ENCODE measurements at regions of chr2 and their contacts with region 1.

Region 1: GRCh38 chr2:202147775-202148174 is 74.7 kb downstream of the KIAA2012 start:
- DNase-seq: no peak
- H3K27ac ChIP-seq: no peak overlapping the region
- CTCF ChIP-seq: no peak

Region 2: GRCh38 chr2:202158796-202159195 is 11.0 kb after region 1 on chr2:
- CTCF ChIA-PET with region 1: no interaction called
- POLR2A ChIA-PET with region 1: no interaction called
- DNase-seq: no peak
- H3K27ac ChIP-seq: no peak overlapping the region
- CTCF ChIP-seq: no peak

Region 3: GRCh38 chr2:202278944-202279343 is 131.2 kb after region 1 on chr2:
- CTCF ChIA-PET with region 1: no interaction called
- POLR2A ChIA-PET with region 1: interaction called, 11 read pairs
- DNase-seq: peak; percentile 17
- H3K27ac ChIP-seq: no peak overlapping the region
- CTCF ChIP-seq: peak; percentile 39

Measured in RWPE1 (cell line).